CD8-positive, alpha-beta T cell (primary cell): ENCODE measurements at regions of chr21 and their contacts with region 1.

Region 1: DNA sequence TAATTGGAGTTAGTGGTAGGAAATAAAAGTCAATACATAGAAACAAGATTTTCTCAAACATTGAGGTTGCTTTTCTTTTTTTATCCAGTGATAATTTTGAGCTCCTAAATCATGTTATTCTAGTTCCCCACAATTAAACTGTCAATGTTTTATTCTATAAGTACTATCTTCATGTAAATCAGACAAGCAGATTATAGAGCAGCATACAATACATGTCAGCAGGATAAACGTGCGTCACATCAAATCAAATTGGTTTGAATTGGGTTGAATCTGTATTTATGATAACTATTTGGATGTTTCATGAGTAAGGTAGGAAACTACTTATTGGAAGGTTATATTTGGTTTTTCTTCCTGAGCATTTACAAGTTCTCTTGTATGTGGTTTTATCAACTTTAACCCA is 2028.7 kb downstream of the NCAM2 start:
- DNase-seq: no peak
- ATAC-seq: no peak
- H3K4me3 ChIP-seq: no peak overlapping the region
- H3K4me3 Mint-ChIP-seq: no peak overlapping the region
- H3K27ac ChIP-seq: no peak overlapping the region
- H3K27ac Mint-ChIP-seq: no peak overlapping the region
- H3K4me1 ChIP-seq: no peaks in the 10 kb centered on the region
- H3K4me1 Mint-ChIP-seq: no peaks in the 10 kb centered on the region
- H3K27me3 ChIP-seq: no peaks in the 10 kb centered on the region
- H3K27me3 Mint-ChIP-seq: no peaks in the 10 kb centered on the region
- CTCF ChIP-seq: no peak

Region 2: DNA sequence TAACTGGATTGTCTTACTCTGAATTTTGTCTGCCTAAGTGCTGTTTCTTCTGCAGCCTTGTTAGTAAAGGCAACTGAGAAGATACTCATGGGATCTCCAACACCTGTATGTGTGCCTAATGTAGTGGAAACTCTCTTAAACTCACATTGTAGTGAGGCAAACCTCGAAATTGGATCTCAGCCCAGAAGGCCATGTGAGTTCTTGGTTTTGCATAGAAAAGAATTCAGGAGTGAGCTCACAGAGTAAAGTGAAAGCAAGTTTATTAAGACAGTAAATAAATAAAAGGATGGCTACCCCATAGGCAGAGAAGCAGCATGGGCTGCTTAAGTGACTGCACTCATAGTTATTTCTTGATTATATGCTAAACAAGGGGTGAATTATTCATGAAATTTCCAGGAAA is 684.0 kb before region 1 on chr21:
- CTCF ChIA-PET with region 1: no interaction called
- POLR2A ChIA-PET with region 1: no interaction called
- intact Hi-C with region 1: no loop called
- DNase-seq: peak in 1 of 9 experiments; percentile 5
- ATAC-seq: no peak
- H3K4me3 ChIP-seq: no peak overlapping the region
- H3K4me3 Mint-ChIP-seq: no peak overlapping the region
- H3K27ac ChIP-seq: no peak overlapping the region
- H3K27ac Mint-ChIP-seq: peak overlapping the region; percentile 13
- H3K4me1 ChIP-seq: no peaks in the 10 kb centered on the region
- H3K4me1 Mint-ChIP-seq: peaks cover 9% of the 10 kb centered on the region
- H3K27me3 ChIP-seq: no peaks in the 10 kb centered on the region
- H3K27me3 Mint-ChIP-seq: no peaks in the 10 kb centered on the region
- CTCF ChIP-seq: no peak

Region 3: DNA sequence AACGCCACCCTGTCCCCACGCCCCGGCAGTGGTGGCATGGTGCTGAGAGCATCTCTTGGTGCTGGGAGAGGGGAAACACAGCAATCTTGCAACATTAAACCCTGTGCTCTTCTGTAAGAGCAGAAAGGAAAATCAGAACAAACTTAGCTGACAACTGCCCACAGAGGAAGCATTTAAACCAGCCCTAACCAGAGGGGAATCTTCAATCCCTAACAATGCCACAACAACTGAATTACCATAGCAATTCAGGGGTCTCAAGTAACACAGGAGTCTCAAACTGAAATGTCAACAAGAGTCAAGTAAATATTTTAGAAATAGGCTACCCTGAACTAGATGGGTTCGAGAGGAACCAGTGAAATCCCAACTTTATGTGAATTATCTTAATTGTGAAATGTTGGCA is 45.1 kb before region 1 on chr21:
- CTCF ChIA-PET with region 1: no interaction called
- POLR2A ChIA-PET with region 1: no interaction called
- intact Hi-C with region 1: loop called in 1 of 2 experiments (anchors 5 kb)
- DNase-seq: no peak
- ATAC-seq: no peak
- H3K4me3 ChIP-seq: no peak overlapping the region
- H3K4me3 Mint-ChIP-seq: no peak overlapping the region
- H3K27ac ChIP-seq: no peak overlapping the region
- H3K27ac Mint-ChIP-seq: no peak overlapping the region
- H3K4me1 ChIP-seq: no peaks in the 10 kb centered on the region
- H3K4me1 Mint-ChIP-seq: no peaks in the 10 kb centered on the region
- H3K27me3 ChIP-seq: no peaks in the 10 kb centered on the region
- H3K27me3 Mint-ChIP-seq: no peaks in the 10 kb centered on the region
- CTCF ChIP-seq: no peak

Region 4: DNA sequence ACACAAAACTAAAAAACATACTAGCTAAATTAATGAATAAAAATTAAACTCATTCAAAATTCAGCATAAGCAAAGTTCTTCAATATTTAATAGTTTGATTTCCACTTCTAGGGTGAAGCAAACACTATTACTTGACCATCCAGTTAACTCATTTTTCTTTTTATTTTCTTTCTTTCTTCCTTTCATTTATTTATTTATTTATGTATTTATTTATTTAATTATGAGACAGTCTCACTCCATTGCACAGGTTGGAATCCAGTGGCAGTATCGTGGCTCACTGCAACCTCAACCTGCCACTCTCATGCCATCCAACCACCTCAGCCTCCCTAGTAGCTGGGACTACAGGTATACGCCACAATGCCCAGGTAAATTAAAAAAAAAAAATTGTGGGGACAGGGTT is 40.8 kb after region 1 on chr21:
- CTCF ChIA-PET with region 1: no interaction called
- POLR2A ChIA-PET with region 1: no interaction called
- intact Hi-C with region 1: loop called in 1 of 2 experiments (anchors 1 kb)
- DNase-seq: no peak
- ATAC-seq: no peak
- H3K4me3 ChIP-seq: no peak overlapping the region
- H3K4me3 Mint-ChIP-seq: no peak overlapping the region
- H3K27ac ChIP-seq: no peak overlapping the region
- H3K27ac Mint-ChIP-seq: no peak overlapping the region
- H3K4me1 ChIP-seq: no peaks in the 10 kb centered on the region
- H3K4me1 Mint-ChIP-seq: no peaks in the 10 kb centered on the region
- H3K27me3 ChIP-seq: no peaks in the 10 kb centered on the region
- H3K27me3 Mint-ChIP-seq: no peaks in the 10 kb centered on the region
- CTCF ChIP-seq: no peak